ENCODE measurements at regions of chr17 and their contacts with region 1.

Region 1: GRCh38 chr17:14871921-14872320 is 393.2 kb downstream of the PMP22 start:
- DNase-seq: no peak
- H3K4me3 ChIP-seq: no peak overlapping the region
- H3K27ac ChIP-seq: no peak overlapping the region
- H3K4me1 ChIP-seq: no peaks in the 10 kb centered on the region
- H3K27me3 ChIP-seq: no peaks in the 10 kb centered on the region
- CTCF ChIP-seq: no peak
- EP300 ChIP-seq: no peak
- POLR2A ChIP-seq: no peak

Region 2: GRCh38 chr17:14672830-14673229 is 199.1 kb before region 1 on chr17:
- in situ Hi-C with region 1: no loop called
- intact Hi-C with region 1: no loop called
- DNase-seq: no peak
- H3K4me3 ChIP-seq: no peak overlapping the region
- H3K27ac ChIP-seq: no peak overlapping the region
- H3K4me1 ChIP-seq: no peaks in the 10 kb centered on the region
- H3K27me3 ChIP-seq: no peaks in the 10 kb centered on the region
- CTCF ChIP-seq: no peak
- EP300 ChIP-seq: no peak
- POLR2A ChIP-seq: no peak

Region 3: DNA sequence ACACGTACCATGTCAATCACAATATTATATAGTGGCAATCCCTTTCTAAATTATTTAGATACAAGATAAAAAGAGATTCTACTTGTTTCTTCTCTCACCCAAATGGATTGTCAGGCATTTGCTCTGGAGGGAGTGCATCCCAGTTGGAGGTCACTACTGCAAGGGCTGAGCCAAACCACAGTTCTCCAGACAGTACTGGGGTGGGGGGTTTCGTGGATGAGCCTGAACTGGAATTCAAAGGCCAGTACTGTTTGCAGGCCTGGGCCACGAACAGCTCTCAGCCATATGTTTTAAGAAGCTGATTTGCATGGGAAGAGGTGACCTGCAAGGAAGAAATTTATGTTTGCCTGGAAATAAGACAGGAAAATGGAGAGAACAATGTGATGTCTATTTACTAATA is 78.3 kb after region 1 on chr17:
- in situ Hi-C with region 1: loop called in 1 of 4 experiments (anchors 25 kb)
- intact Hi-C with region 1: no loop called
- DNase-seq: no peak
- H3K4me3 ChIP-seq: no peak overlapping the region
- H3K27ac ChIP-seq: no peak overlapping the region
- H3K4me1 ChIP-seq: no peaks in the 10 kb centered on the region
- H3K27me3 ChIP-seq: no peaks in the 10 kb centered on the region
- CTCF ChIP-seq: no peak
- EP300 ChIP-seq: no peak
- POLR2A ChIP-seq: no peak